ENCODE measurements at regions of chr9 and their contacts with region 1.

Region 1: GRCh38 chr9:14768405-14769229 is 46.1 kb upstream of the CER1 start:
- DNase-seq: peak; percentile 23 to 52
- ATAC-seq: peak; percentile 49 to 68; a peak in 5 of 6 replicates
- H3K4me3 ChIP-seq: peak overlapping the region; percentile 26; the same call in 1 of the 3 replicates
- H3K27ac ChIP-seq: no peak overlapping the region
- H3K4me1 ChIP-seq: no peaks in the 10 kb centered on the region
- CTCF ChIP-seq: peak; percentile 78
- EP300 ChIP-seq: no peak
- POLR2A ChIP-seq: no peak
- RAD21 ChIP-seq: peak; percentile 78

Region 2: GRCh38 chr9:14441976-14442651 is 326.5 kb before region 1 on chr9:
- CTCF ChIA-PET with region 1: interaction called, 15 read pairs
- POLR2A ChIA-PET with region 1: no interaction called
- DNase-seq: peak; percentile 45 to 82
- ATAC-seq: peak; percentile 96 to 99
- H3K4me3 ChIP-seq: no peak overlapping the region
- H3K27ac ChIP-seq: no peak overlapping the region
- H3K4me1 ChIP-seq: peaks cover 3% of the 10 kb centered on the region; the same call in 1 of the 3 replicates
- CTCF ChIP-seq: peak; percentile 54
- EP300 ChIP-seq: no peak
- POLR2A ChIP-seq: no peak
- RAD21 ChIP-seq: peak; percentile 46 to 47

Region 3: DNA sequence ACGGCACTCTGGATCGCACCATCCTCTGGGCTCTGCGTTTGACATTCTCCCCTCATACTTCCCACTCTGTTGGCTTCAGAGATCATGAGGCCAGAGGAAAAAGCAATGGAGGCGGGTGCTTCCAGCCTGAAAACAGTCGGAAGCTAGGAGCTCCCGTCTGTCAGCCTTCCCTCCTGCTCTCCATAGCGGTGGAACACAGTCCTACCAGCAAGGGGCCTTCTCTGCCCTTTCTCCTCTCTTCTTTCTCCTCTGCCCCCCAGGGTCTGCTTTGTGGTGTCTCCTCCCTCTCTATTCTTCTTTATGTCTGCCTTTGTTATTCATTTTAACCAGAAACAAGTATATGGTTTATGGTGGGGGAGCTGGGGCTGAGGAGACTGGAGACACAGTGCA is 302.2 kb before region 1 on chr9:
- CTCF ChIA-PET with region 1: interaction called, 29 read pairs
- POLR2A ChIA-PET with region 1: no interaction called
- DNase-seq: no peak
- ATAC-seq: peak in 1 of 2 experiments; percentile 14; a peak in 1 of 6 replicates
- H3K4me3 ChIP-seq: no peak overlapping the region
- H3K27ac ChIP-seq: no peak overlapping the region
- H3K4me1 ChIP-seq: peaks cover 9% of the 10 kb centered on the region; the same call in 2 of the 3 replicates
- CTCF ChIP-seq: no peak
- EP300 ChIP-seq: no peak
- POLR2A ChIP-seq: no peak
- RAD21 ChIP-seq: no peak

Region 4: DNA sequence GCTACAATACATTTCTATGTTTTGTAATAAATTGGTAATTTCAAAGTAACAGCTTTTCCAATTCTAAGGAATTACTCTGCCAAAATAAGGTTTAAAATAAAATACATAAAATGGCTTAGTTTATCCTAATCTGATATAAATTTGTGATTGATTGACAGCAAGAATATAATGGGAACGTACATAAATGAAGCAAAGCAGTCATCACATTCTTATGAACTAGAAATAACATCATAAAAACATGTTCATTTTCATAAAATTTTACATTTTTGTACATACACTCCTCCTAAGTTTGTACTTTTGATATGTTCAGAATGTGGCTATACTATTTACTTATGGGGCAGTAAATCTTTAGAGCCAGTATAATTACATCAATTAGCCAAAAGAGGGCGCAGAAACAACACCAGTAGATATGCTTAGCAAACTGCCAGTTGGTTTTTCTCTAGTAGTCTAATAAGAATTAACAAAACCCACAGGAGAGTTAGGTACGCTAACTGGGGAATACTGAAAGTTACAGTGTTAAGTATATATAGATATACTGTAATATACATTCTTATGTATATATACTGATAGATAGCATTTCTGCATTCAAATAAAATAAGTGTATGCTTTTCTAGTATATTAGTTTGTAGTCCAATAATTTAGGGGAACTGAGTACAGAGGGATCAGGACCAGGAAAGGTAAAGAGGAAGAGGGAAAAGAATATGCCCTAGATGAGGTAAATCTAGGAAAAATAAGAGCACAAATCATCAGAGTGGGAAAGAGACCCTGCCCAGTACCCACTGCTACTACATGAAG is 152.2 kb before region 1 on chr9:
- CTCF ChIA-PET with region 1: interaction called, 15 read pairs
- POLR2A ChIA-PET with region 1: no interaction called
- DNase-seq: peak; percentile 6 to 66
- ATAC-seq: peak; percentile 71 to 82; a peak in 4 of 6 replicates
- H3K4me3 ChIP-seq: no peak overlapping the region
- H3K27ac ChIP-seq: no peak overlapping the region
- H3K4me1 ChIP-seq: no peaks in the 10 kb centered on the region
- CTCF ChIP-seq: peak; percentile 86
- EP300 ChIP-seq: no peak
- POLR2A ChIP-seq: no peak
- RAD21 ChIP-seq: peak; percentile 76 to 79

Region 5: GRCh38 chr9:14779566-14780022 is 11.0 kb after region 1 on chr9:
- CTCF ChIA-PET with region 1: interaction called, 22 read pairs
- POLR2A ChIA-PET with region 1: no interaction called
- DNase-seq: no peak
- ATAC-seq: no peak
- H3K4me3 ChIP-seq: no peak overlapping the region
- H3K27ac ChIP-seq: no peak overlapping the region
- H3K4me1 ChIP-seq: no peaks in the 10 kb centered on the region
- CTCF ChIP-seq: no peak
- EP300 ChIP-seq: no peak
- POLR2A ChIP-seq: no peak
- RAD21 ChIP-seq: no peak

Measured in A549 (cell line).